ENCODE measurements at regions of chr20 and their contacts with region 1.

Region 1: DNA sequence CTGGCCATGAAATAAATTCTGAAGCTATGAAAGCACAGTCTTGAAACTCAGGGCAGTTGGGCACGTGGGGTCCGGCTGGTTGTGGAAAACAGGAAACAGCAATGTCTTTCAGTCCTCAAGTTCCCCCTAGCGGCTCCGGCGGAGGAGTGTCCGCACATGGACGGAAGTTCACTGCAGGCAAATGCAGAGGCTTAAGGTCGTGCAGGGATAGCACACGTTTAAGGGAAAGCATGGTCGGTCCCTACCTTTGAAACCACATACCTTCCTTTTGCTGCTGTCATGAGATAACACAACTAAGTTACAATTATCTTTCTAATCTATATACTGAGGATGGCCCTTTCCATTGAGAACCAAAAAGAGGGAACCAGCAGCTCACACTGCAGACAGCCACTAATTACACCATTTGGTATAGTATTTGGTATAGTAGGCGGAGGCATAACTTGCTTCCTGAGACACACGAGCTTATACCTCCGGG is 52.6 kb upstream of the NFATC2 start:
- DNase-seq: peak; percentile 55
- H3K4me3 ChIP-seq: no peak overlapping the region
- CTCF ChIP-seq: peak; percentile 94

Region 2: DNA sequence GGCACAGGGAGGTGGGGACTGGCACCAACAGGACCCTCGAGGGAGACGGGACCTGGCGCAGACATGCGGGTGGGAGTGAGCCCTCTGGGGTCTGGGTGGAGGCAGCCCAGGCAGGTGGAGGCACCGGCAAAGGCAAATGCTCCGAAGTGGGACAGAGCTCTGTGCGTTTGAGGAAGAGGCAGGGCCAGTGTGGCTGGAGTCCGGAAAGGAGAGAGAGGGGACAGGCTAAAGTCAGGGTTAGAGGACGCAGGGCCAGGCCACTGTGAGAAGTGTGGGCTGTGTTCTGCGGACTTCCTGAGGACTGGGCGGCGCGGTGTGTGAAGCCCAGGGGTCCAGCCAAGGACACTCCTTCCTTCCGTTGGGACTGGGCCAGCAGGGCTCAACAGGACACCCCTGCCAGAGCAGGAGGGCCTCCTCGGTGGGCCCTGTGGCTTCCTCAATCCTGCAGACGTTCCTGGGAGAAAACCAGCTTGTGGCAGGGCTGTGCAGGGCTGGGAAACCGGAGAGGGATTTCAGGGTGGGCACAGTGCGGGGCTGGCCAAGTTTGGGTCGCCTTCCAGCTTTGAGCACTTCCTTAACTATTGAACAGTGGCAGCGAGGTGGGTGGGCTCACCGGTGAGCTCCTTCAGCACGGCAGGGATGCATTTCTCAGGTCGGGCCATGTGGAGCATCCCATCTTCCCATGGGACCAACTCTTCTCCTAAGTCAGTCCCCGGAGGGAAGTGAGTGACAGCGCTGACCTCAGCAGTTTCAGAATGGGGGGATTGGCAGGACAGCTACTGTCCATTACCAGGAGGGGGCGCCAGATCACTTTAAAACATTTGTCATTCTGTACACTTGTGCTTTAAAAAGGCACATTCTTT is 614.0 kb before region 1 on chr20:
- CTCF ChIA-PET with region 1: interaction called, 63 read pairs
- POLR2A ChIA-PET with region 1: no interaction called
- DNase-seq: no peak
- H3K4me3 ChIP-seq: no peak overlapping the region
- CTCF ChIP-seq: peak; percentile 77

Region 3: DNA sequence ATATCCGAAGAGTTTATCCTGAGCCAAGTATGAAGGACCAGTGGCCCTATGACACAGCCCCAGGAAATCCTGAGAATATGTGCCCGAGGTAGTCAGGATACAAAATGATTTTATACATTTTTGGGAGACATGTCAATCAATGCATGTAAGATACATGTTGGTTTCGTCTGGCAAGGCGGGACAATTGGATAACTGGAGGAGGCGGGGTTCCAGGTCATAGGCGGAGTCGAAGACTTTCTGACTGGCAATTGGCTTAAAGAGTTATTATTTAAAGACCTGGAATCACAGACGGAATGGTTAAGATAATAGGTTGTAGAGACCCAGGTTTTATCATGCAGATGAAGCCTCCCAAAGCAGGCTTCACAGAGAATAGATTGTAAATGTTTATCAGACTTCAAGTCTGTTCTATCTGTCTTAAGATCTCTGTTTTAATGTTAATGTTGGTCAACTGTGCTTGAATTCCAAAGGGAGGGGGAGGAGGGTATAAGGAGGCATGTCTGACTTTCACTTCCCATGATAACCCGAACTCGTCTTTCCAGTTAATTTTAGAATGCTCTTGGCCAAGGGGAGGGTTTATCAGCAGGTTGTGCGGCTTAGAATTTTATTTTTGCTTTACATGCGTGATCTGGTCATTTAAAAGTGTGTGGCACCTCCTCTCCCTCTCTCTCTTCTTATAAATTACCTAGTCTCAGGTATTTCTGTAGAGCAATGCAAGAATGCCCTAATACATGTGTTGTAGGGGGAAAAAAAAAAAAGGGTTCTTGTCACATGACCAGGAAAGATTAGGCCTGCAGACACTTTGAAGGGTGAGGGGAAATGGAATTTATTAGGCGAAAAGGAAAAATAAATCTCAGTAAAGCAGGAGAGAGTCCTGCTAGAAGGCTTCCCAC is 283.2 kb before region 1 on chr20:
- CTCF ChIA-PET with region 1: interaction called, 17 read pairs
- POLR2A ChIA-PET with region 1: interaction called, 4 read pairs
- DNase-seq: no peak
- H3K4me3 ChIP-seq: no peak overlapping the region
- CTCF ChIP-seq: no peak

Region 4: DNA sequence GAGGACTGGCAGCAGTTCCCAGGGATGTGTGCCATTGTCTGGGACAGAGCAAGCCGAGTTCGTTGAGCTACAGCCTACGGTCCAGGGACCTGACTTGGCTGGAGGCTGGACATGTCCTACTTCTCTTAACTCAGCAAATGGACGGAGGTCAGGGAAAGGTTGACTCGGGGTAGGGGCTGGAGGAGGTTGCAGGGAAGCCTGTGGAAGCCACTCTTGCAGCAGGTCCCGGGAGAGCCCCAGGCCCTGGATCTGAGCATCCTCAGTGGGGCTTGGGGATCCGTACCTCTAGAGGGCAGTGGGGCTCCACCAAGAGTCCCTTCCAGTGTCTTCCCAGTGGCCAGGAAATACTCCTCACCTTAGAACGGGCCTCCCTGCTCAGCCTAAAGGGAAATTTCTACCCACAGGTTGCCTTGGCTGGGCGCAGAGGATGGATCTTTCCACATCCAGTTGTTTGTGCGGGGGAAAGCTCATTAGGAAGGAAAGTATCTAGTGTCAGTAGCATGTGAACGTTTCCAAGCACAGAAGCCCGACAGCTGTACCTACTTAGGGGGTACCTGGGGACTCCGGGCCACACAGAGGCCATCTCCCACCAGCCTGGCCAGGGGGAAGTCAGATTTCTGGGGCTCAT is 222.8 kb before region 1 on chr20:
- CTCF ChIA-PET with region 1: interaction called, 206 read pairs
- POLR2A ChIA-PET with region 1: no interaction called
- DNase-seq: no peak
- H3K4me3 ChIP-seq: no peak overlapping the region
- CTCF ChIP-seq: peak; percentile 90

Region 5: DNA sequence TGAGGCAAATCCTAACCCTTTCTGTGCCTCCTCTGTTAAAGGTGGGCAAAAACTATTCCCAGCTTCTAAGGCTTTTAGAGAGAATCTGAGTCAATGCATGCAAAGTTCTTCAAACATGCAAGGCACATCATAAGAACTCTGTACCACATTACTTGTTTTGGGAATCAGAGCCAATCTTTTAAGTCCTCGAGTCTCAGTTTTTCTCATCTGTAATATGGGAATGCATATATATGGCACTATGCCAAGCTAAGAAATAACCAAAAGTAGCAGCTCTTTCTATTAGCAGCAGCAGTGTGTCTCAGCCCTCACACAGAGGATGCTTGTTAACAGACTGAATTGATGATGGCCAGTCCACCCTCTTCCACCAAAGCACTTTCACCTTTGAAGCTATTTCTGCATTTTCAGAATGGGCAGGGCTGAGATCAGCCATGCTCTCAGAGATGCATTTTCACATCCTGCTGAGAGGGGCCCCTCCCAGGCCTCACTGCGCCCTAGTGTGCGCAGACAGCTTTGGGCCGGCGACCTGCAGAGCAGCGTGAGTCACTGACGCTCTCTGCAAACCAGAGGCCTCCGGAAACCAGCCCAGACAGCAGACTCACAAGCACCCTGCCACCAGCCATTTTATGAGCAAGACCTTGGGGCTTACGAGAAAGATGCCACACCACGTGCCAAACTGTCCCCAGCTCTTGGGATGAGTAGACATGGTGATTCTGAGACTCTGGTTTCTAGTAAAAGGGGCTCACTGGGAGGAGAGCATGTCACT is 190.6 kb before region 1 on chr20:
- CTCF ChIA-PET with region 1: interaction called, 12 read pairs
- POLR2A ChIA-PET with region 1: no interaction called
- DNase-seq: no peak
- H3K4me3 ChIP-seq: no peak overlapping the region
- CTCF ChIP-seq: no peak

Region 6: GRCh38 chr20:51574248-51574992 is 20.7 kb before region 1 on chr20:
- CTCF ChIA-PET with region 1: interaction called, 13 read pairs
- POLR2A ChIA-PET with region 1: no interaction called
- DNase-seq: no peak
- H3K4me3 ChIP-seq: no peak overlapping the region
- CTCF ChIP-seq: no peak

Region 7: DNA sequence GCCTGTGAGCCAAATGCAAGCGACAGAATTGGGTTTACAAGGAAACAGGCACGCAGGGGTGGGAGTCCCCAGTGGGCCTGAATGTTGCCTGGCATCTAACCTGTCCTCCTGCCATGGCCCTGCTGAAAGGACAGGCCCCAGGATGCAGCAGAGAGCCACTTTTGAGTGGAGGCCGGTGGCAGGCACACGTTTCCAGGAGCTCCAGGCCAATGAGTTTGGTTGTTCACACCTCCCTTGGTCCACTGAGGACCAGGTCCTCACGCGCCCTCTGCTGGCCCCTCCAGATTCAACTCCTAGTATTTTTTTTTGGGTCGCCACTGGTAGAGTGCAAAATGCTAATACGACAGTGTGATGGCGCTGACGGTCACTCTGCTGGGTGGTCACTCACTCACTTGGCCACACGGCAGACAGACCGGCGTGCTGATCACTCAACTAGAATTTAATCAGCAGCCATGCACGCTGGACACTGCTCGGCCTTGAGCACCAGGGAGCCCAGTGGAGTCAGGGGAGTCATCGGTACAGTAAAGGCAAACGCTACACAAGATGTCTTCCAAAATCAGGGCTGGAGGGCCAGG is 29.1 kb after region 1 on chr20:
- CTCF ChIA-PET with region 1: interaction called, 45 read pairs
- POLR2A ChIA-PET with region 1: no interaction called
- DNase-seq: no peak
- H3K4me3 ChIP-seq: no peak overlapping the region
- CTCF ChIP-seq: peak; percentile 73

Region 8: GRCh38 chr20:51687062-51687461 is 92.0 kb after region 1 on chr20:
- CTCF ChIA-PET with region 1: no interaction called
- POLR2A ChIA-PET with region 1: no interaction called
- DNase-seq: peak; percentile 5
- H3K4me3 ChIP-seq: no peak overlapping the region
- CTCF ChIP-seq: no peak